ENCODE measurements at regions of chr10 and their contacts with region 1.

Region 1: GRCh38 chr10:129332476-129332875 is 134.6 kb upstream of the MGMT start:
- DNase-seq: peak; percentile 88
- H3K4me3 ChIP-seq: no peak overlapping the region
- H3K27ac ChIP-seq: peak overlapping the region; percentile 58
- H3K4me1 ChIP-seq: peaks cover 64% of the 10 kb centered on the region
- H3K27me3 ChIP-seq: no peaks in the 10 kb centered on the region
- CTCF ChIP-seq: peak; percentile 96

Region 2: DNA sequence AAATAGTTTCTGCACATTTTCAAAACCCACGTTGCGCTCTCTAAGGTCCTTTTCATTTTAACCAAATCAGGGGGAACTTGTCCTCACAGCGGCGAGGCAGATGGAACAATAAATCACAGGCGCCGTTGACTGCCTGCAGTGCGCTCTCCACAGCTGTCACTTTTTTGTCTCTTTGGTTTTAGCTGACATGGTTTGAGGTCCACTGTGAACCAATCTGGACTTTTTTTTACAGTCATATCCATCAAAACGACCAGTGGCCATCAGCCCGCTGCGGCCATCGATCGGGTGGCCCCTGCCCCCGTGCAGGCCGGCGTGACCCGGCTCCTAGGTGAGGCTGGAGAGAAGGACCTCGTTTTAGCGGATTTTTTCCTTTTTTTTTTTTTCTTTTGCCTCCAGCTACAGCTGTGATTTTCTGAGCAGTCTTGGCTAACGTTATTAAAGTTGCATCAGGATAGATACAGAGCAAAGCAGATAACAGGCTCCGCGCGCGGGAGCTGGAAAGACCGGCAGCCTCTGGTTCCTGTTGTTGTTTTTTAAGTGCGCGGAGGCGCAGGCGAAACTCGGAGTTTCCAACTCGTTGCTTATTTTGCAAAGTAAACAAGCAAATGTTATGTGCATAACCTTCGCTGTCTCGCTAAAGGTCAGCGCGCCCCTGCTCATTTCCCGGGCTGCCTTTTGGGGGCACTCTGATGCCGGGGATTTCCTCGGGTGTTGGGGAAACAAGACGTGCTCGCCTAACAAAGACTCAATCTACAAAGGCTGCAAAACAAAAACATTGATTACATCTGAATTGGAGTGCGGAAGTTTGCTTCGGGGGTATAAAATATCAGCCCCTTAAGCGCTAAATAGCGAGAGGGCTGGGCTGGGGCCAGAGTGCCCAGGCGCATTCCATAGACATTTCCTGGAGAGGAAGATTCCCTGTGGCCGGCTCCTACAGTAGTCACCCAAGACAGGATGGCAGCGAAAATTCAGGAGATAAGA is 791.4 kb before region 1 on chr10:
- CTCF ChIA-PET with region 1: no interaction called
- POLR2A ChIA-PET with region 1: no interaction called
- intact Hi-C with region 1: loop called (anchors 5 kb)
- DNase-seq: peak; percentile 53
- H3K4me3 ChIP-seq: peak overlapping the region; percentile 32
- H3K27ac ChIP-seq: no peak overlapping the region
- H3K4me1 ChIP-seq: peaks cover 35% of the 10 kb centered on the region
- H3K27me3 ChIP-seq: peaks cover 8% of the 10 kb centered on the region
- CTCF ChIP-seq: peak; percentile 65

Region 3: DNA sequence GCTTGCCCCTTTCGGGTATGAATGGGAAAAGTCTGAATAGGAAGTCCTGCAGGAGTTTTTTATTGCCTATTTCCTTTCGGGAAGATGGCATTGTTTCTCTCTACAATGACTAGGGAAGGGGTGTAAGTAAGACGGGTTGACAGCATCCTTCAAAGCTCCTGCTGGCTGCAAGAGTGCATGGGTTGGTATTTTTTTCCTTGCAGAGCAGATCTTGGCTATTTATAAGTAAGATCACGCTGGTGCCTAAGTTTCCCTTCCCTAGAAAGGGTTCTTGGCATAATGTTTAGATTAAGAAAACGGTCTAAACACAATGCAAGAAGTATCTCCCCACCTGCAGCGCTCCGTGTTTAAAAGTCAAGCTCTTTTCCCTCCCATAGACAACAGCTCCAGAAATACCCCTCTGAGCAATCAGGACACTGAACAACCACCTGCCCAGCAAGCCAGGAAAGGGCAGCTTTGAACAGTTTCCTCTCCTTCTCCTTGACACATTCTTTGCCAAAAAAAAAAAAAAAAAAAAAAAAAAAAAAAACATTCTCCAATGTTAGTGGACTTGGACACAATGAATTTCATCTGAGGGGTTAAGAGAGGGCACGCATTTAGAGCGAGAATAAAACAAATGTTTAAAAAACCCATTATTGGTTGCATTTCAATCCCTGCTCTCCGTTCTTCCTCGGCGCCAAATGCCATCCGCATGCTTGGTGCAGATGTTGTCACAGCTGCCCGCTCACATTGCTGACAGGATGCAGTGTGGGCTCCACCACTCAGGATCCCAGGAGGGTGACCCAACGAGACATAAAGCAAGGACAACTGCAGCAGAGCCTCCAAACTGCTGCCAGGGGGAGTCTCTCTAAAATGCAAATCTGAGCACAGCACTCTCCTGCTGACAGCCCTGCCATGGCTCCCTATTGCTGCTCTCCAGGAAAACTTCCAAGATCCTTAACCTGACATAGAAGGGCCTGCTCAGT is 292.8 kb before region 1 on chr10:
- CTCF ChIA-PET with region 1: interaction called, 11 read pairs
- POLR2A ChIA-PET with region 1: no interaction called
- intact Hi-C with region 1: no loop called
- DNase-seq: peak; percentile 84
- H3K4me3 ChIP-seq: no peak overlapping the region
- H3K27ac ChIP-seq: peak overlapping the region; percentile 71
- H3K4me1 ChIP-seq: peaks cover 71% of the 10 kb centered on the region
- H3K27me3 ChIP-seq: no peaks in the 10 kb centered on the region
- CTCF ChIP-seq: no peak

Region 4: DNA sequence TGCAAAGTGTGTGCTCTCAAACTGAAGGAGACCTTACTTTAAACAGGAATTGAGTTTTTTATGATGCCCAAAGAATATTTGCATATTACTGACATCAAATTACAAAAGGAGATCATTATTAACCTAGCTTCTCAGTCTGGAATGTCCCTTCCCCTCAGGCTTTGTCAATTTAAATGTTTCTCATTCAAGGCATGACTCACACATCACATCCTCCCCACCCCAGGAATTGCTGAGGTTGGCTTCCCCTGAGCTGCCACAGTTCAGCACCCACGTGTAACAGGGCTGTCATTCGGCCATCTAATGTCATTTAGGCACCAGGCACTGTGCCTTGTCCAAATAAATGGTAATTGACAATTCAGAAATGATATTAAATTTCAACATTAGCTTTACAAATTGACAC is 171.3 kb before region 1 on chr10:
- CTCF ChIA-PET with region 1: interaction called, 3 read pairs
- POLR2A ChIA-PET with region 1: no interaction called
- intact Hi-C with region 1: loop called (anchors 10 kb)
- DNase-seq: peak; percentile 94
- H3K4me3 ChIP-seq: no peak overlapping the region
- H3K27ac ChIP-seq: peak overlapping the region; percentile 1
- H3K4me1 ChIP-seq: peaks cover 19% of the 10 kb centered on the region
- H3K27me3 ChIP-seq: no peaks in the 10 kb centered on the region
- CTCF ChIP-seq: no peak